Adrenal gland (tissue), 19 donors: ENCODE measurements at regions of chr15 and their contacts with region 1.

Region 1: DNA sequence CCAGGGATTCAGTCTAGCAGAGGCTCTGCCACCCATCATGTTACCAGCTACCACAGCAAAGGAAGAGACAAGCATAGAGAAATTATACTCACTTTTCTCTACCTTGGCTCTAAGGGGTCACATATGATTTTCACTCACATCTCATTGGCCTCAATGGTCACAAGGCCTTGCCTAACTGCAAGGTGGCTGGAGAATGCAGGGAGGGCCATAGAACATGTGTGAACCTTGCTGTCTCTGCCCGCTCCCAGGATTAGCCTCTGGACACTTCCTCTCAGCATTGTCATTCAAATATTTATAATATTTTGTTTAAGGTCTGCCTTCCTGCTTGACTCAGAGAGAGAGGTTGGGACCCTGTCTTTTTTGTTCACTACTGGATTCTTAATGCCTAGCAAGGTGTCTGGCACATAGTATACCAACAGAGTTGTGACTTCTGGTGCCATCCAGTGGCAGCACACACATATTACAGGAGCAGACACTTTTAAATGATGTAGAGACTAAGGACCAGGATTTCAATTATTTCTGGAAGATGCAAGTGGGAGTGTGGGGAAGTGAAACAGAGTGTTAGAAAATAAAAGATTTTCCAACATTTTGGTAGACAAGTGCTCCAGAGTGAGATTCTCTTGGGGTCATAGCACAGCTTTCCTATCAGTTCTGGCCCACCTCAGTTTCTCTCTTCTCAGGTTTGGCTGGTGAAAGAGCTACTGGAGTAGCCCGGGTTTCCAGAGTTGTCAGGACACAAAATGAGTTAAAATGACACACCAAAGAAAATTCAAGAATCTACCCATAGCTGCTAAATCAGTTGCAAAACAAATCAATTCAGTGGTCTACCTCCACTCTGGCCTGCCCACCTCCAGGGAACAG is 119.0 kb upstream of the RASGRP1 start:
- DNase-seq: peak; percentile 39 to 79 (median 60)
- H3K4me3 ChIP-seq: no peak overlapping the region
- H3K27ac ChIP-seq: no peak overlapping the region
- H3K4me1 ChIP-seq: no peaks in the 10 kb centered on the region
- H3K27me3 ChIP-seq: no peaks in the 10 kb centered on the region
- CTCF ChIP-seq: peak; percentile 67 to 85 (median 75)
- POLR2A ChIP-seq: no peak

Region 2: DNA sequence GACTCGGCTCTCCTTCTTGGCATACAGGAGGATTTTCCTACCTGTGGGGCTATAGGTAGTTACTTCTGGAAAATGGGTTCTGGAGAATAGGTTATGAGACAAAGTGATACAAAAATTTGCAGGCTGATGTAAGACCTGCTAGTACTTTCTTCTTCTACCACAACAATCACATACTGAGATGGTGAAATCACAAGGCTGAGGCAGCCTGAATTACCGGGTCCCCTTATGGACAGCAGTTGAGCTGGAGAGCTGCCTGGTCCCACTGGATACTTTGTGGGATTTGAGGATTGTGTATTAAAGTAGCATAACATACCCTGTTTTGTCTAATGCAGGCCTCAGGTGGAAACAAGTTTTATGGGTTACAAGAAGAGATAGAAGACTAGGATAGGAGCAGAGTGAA is 316.1 kb before region 1 on chr15:
- intact Hi-C with region 1: no loop called
- DNase-seq: no peak
- H3K4me3 ChIP-seq: no peak overlapping the region
- H3K27ac ChIP-seq: no peak overlapping the region
- H3K4me1 ChIP-seq: no peaks in the 10 kb centered on the region
- H3K27me3 ChIP-seq: no peaks in the 10 kb centered on the region
- CTCF ChIP-seq: no peak
- POLR2A ChIP-seq: no peak

Region 3: GRCh38 chr15:38398134-38398533 is 285.5 kb before region 1 on chr15:
- intact Hi-C with region 1: no loop called
- DNase-seq: peak in 4 of 7 donors; percentile 3 to 58 (median 22)
- H3K4me3 ChIP-seq: no peak overlapping the region
- H3K27ac ChIP-seq: no peak overlapping the region
- H3K4me1 ChIP-seq: peaks cover 7 to 8% of the 10 kb centered on the region in 2 donors
- H3K27me3 ChIP-seq: no peaks in the 10 kb centered on the region
- CTCF ChIP-seq: no peak
- POLR2A ChIP-seq: no peak

Region 4: GRCh38 chr15:38440353-38441129 is 243.1 kb before region 1 on chr15:
- intact Hi-C with region 1: loop called (anchors 10 kb)
- DNase-seq: peak in 6 of 7 donors; percentile 25 to 70 (median 40)
- H3K4me3 ChIP-seq: no peak overlapping the region
- H3K27ac ChIP-seq: no peak overlapping the region
- H3K4me1 ChIP-seq: no peaks in the 10 kb centered on the region
- H3K27me3 ChIP-seq: no peaks in the 10 kb centered on the region
- CTCF ChIP-seq: peak; percentile 77 to 95 (median 88)
- POLR2A ChIP-seq: no peak

Region 5: GRCh38 chr15:38474155-38474757 is 209.4 kb before region 1 on chr15:
- intact Hi-C with region 1: loop called in 1 of 2 experiments (anchors 5 kb)
- DNase-seq: peak; percentile 16 to 57 (median 36)
- H3K4me3 ChIP-seq: no peak overlapping the region
- H3K27ac ChIP-seq: no peak overlapping the region
- H3K4me1 ChIP-seq: no peaks in the 10 kb centered on the region
- H3K27me3 ChIP-seq: no peaks in the 10 kb centered on the region
- CTCF ChIP-seq: peak; percentile 21 to 90 (median 82)
- POLR2A ChIP-seq: no peak

Region 6: GRCh38 chr15:38563723-38564519 is 119.7 kb before region 1 on chr15:
- intact Hi-C with region 1: loop called (anchors 5 to 10 kb)
- DNase-seq: peak; percentile 59 to 75 (median 66)
- H3K4me3 ChIP-seq: peak overlapping the region in 3 of 4 donors; percentile 4 to 70 (median 57)
- H3K27ac ChIP-seq: no peak overlapping the region
- H3K4me1 ChIP-seq: peaks cover 0 to 12% of the 10 kb centered on the region in 2 donors
- H3K27me3 ChIP-seq: peaks cover 10% of the 10 kb centered on the region
- CTCF ChIP-seq: peak; percentile 60 to 84 (median 76)
- POLR2A ChIP-seq: no peak

Region 7: DNA sequence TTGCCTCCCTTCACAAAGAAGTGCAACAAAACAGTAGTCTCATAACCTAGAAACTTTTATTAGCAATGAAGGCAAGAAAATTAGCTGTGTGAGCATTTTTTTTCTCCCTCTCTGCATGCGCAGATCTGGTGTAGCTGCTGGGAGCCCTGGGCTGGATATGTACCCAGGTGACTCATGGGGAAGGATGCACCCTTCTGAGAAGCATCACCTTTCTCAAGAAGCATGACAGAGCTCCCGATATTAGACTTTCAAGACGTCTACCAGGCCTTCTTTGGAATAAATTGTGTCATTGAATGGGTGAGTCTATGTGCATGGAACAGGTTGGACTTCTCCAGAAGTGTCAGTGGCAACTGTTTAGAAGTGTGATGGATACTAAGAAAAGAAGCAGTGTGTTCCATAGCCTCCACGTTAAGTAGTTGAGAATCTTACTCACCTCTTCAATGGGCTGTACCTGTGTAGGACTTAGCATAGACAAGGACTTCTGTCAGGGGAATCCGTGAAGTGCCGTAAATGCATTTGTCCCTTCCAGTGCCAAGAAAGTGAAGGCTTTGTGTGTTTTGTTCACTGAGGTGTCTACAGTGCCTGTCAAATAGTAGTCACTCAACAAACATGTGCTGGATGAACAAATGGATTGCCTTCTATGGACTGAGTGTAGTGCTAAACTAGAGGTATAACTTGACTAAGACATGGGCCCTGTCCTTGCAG is 71.3 kb before region 1 on chr15:
- intact Hi-C with region 1: no loop called
- DNase-seq: no peak
- H3K4me3 ChIP-seq: no peak overlapping the region
- H3K27ac ChIP-seq: no peak overlapping the region
- H3K4me1 ChIP-seq: no peaks in the 10 kb centered on the region
- H3K27me3 ChIP-seq: no peaks in the 10 kb centered on the region
- CTCF ChIP-seq: no peak
- POLR2A ChIP-seq: no peak

Region 8: GRCh38 chr15:39016706-39017105 is 333.1 kb after region 1 on chr15:
- intact Hi-C with region 1: no loop called
- DNase-seq: no peak
- H3K4me3 ChIP-seq: no peak overlapping the region
- H3K27ac ChIP-seq: no peak overlapping the region
- H3K4me1 ChIP-seq: no peaks in the 10 kb centered on the region
- H3K27me3 ChIP-seq: no peaks in the 10 kb centered on the region
- CTCF ChIP-seq: no peak
- POLR2A ChIP-seq: no peak